Right ventricle myocardium inferior (tissue), 1 donor: ENCODE measurements at regions of chr19 and their contacts with region 1.

Region 1: GRCh38 chr19:43595999-43596841 is at the starts of genes IRGQ and ZNF576:
- DNase-seq: peak; percentile 100
- ATAC-seq: peak; percentile 95
- total RNA-seq, gene IRGQ: 16.2 TPM
- total RNA-seq, gene ZNF576: 9.3 TPM

Region 2: GRCh38 chr19:43463381-43464136 is 132.7 kb before region 1 on chr19:
- intact Hi-C with region 1: loop called (anchors 10 kb)
- DNase-seq: peak; percentile 99
- ATAC-seq: peak; percentile 95

Region 3: DNA sequence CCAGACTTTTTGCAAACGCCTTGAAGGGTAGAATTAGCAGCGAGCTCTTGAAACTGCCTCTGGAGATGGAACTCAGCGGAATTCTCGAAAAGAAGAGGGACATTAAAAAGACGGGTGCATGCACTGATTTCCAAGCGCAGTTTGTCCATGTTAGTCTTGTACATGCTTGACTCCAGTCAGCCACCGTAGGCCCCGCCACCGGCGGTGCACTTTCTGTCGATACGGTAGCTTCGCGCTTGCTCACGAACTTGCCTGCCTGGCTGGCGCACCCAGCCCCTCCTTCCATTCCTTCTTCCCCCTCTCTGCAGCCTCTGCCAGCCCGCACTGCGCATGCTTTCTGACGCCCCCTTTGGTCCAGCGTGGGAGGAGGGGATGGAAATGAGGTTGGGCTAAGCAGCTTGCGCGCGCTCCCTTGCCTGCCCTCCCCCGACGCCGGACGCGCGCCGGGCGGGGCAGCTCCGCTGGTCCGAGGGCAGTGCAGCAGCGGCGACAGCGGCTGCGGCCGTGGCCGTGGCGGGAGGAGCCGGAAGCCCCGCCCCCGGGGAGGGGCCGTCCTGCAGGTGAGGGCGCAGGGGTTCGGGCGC is 63.2 kb before region 1 on chr19 and contains the start of gene ZNF575:
- intact Hi-C with region 1: loop called (anchors 1 kb)
- DNase-seq: peak; percentile 94
- ATAC-seq: peak; percentile 80
- total RNA-seq, gene ZNF575: 1.8 TPM

Region 4: GRCh38 chr19:43545981-43546380 is 50.2 kb before region 1 on chr19:
- intact Hi-C with region 1: no loop called
- DNase-seq: no peak
- ATAC-seq: no peak

Region 5: GRCh38 chr19:43575156-43575950 is 20.9 kb before region 1 on chr19 and contains the starts of genes PINLYP and XRCC1:
- intact Hi-C with region 1: loop called (anchors 1 kb)
- DNase-seq: peak; percentile 99
- ATAC-seq: peak; percentile 99
- total RNA-seq, gene PINLYP: 2.2 TPM
- total RNA-seq, gene XRCC1: 12.2 TPM

Region 6: DNA sequence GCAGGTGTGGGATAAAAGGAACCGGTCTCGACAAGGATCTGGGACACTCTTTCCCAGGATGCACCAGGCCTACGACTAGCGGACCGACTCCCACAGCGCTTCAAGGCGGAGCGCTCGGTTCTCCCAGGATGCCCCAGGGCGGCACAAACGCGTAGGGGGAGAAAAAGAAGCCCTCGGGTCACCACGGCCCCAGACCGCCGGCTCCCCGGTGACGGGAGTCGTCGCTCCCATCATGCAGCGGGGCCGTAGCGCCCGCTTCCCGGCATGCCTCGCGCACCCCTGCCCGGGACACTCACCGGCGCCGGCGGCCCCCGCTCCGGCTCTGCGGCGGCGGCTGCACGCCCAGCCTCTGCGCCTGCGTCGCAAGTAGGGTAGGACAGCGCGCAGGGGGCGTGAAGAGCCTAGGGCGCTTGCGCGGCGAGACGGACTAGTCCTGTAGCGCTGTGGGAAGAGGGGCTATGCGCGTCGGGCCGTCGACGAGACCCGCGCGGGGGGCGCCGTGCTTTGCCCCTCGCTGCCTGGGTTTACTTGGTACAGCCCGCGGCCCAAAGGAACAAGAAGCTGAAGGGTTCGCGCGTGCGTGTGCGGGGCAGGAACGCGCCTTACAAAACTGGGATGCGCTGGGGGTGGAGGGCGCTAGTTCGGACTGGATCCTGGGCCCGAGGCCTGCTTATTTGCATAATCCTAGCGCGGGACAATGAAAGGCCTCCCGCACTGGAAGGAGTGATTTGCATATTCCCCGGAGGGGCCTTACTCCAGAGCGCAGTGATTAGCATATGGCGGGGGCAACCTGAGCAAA is 23.2 kb after region 1 on chr19 and contains the start of gene ZNF428:
- intact Hi-C with region 1: loop called (anchors 1 kb)
- DNase-seq: peak; percentile 94
- ATAC-seq: peak; percentile 96
- total RNA-seq, gene ZNF428: 32.9 TPM